PC-9 (cell line): ENCODE measurements at regions of chr5 and their contacts with region 1.

Region 1: DNA sequence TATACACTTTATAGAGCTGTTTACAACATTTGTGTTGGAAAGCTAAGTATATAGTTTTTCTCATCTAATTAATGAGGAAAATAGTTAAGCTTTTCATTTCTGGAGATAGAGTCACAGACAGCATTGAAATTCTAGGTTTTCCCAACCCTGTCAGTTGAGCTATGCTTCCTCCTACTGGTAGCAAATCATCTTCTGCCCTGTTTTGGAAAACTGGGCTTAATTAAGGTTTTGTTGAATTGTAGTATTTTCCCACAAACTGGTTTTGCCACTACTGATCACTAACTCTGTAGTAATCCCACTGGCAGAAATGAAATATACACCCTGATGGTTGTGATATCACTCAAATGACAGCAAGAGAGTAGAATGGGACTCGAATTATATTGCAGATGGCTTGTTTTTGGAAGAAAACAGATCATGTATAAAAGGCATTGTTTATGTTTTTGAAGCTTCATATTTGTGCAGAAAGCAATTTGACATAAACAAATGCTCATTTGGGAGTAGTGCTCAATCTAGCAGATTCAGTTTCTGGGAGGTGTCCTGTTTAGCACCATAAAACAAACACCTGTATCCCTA is 46.6 kb downstream of the CD180 start:
- DNase-seq: peak in 1 of 2 experiments; percentile 58
- H3K4me3 ChIP-seq: no peak overlapping the region
- H3K27ac ChIP-seq: no peak overlapping the region
- H3K4me1 ChIP-seq: no peaks in the 10 kb centered on the region; the same call in 1 of the 2 replicates
- H3K27me3 ChIP-seq: no peaks in the 10 kb centered on the region
- CTCF ChIP-seq: peak; percentile 61

Region 2: GRCh38 chr5:66814146-66814991 is 335.7 kb before region 1 on chr5:
- CTCF ChIA-PET with region 1: interaction called, 3 read pairs
- POLR2A ChIA-PET with region 1: no interaction called
- intact Hi-C with region 1: loop called (anchors 5 kb)
- DNase-seq: peak in 1 of 2 experiments; percentile 29
- H3K4me3 ChIP-seq: no peak overlapping the region
- H3K27ac ChIP-seq: no peak overlapping the region
- H3K4me1 ChIP-seq: no peaks in the 10 kb centered on the region
- H3K27me3 ChIP-seq: no peaks in the 10 kb centered on the region
- CTCF ChIP-seq: peak; percentile 93

Region 3: GRCh38 chr5:66828548-66829357 is 321.3 kb before region 1 on chr5:
- CTCF ChIA-PET with region 1: interaction called, 6 read pairs
- POLR2A ChIA-PET with region 1: no interaction called
- intact Hi-C with region 1: loop called (anchors 5 kb)
- DNase-seq: peak; percentile 34 to 78
- H3K4me3 ChIP-seq: no peak overlapping the region; the same call in 1 of the 2 replicates
- H3K27ac ChIP-seq: no peak overlapping the region
- H3K4me1 ChIP-seq: peaks cover 26% of the 10 kb centered on the region
- H3K27me3 ChIP-seq: no peaks in the 10 kb centered on the region
- CTCF ChIP-seq: no peak

Region 4: GRCh38 chr5:66987949-66988838 is 161.8 kb before region 1 on chr5:
- CTCF ChIA-PET with region 1: interaction called, 3 read pairs
- POLR2A ChIA-PET with region 1: no interaction called
- intact Hi-C with region 1: loop called (anchors 5 kb)
- DNase-seq: no peak
- H3K4me3 ChIP-seq: no peak overlapping the region
- H3K27ac ChIP-seq: no peak overlapping the region
- H3K4me1 ChIP-seq: peaks cover 21% of the 10 kb centered on the region
- H3K27me3 ChIP-seq: no peaks in the 10 kb centered on the region
- CTCF ChIP-seq: peak; percentile 89

Region 5: DNA sequence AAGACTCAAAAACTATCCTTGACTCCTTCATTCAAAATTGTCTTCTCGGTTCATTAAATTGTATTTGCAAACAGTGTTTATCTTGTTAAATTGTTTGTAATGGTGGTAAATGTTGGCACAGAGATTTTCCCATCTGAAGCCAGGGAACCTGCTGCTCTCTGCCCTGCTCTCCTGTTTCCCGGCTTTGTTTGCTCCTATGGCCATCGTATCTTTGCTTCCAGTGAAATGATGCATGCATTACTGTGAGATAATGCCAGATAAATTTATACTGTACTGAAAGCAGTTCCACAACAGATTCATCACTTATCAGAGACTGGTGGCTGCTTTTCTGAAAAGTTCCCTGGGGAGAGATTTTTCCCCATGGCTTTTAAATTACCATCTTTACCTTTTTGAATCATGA is 34.8 kb before region 1 on chr5:
- CTCF ChIA-PET with region 1: no interaction called
- POLR2A ChIA-PET with region 1: no interaction called
- intact Hi-C with region 1: no loop called
- DNase-seq: no peak
- H3K4me3 ChIP-seq: no peak overlapping the region
- H3K27ac ChIP-seq: no peak overlapping the region
- H3K4me1 ChIP-seq: peaks cover 18% of the 10 kb centered on the region
- H3K27me3 ChIP-seq: no peaks in the 10 kb centered on the region
- CTCF ChIP-seq: no peak

Region 6: GRCh38 chr5:67416133-67416937 is 266.3 kb after region 1 on chr5:
- CTCF ChIA-PET with region 1: no interaction called
- POLR2A ChIA-PET with region 1: no interaction called
- intact Hi-C with region 1: no loop called
- DNase-seq: no peak
- H3K4me3 ChIP-seq: no peak overlapping the region
- H3K27ac ChIP-seq: no peak overlapping the region
- H3K4me1 ChIP-seq: no peaks in the 10 kb centered on the region
- H3K27me3 ChIP-seq: no peaks in the 10 kb centered on the region
- CTCF ChIP-seq: no peak